ENCODE measurements at regions of chr17 and their contacts with region 1.

Region 1: GRCh38 chr17:7909080-7909479 is 7.0 kb downstream of the RNF227 start:
- DNase-seq: no peak
- ATAC-seq: no peak
- H3K4me3 Mint-ChIP-seq: no peak overlapping the region
- H3K27ac Mint-ChIP-seq: no peak overlapping the region
- H3K4me1 Mint-ChIP-seq: peaks cover 4% of the 10 kb centered on the region
- H3K27me3 Mint-ChIP-seq: no peaks in the 10 kb centered on the region
- CTCF ChIP-seq: no peak

Region 2: GRCh38 chr17:7922845-7923628 is 14.0 kb after region 1 on chr17:
- CTCF ChIA-PET with region 1: no interaction called
- POLR2A ChIA-PET with region 1: no interaction called
- intact Hi-C with region 1: loop called (anchors 1 kb)
- DNase-seq: peak; percentile 71
- ATAC-seq: peak; percentile 98
- H3K4me3 Mint-ChIP-seq: peak overlapping the region; percentile 82
- H3K27ac Mint-ChIP-seq: peak overlapping the region; percentile 80
- H3K4me1 Mint-ChIP-seq: peaks cover 19% of the 10 kb centered on the region
- H3K27me3 Mint-ChIP-seq: no peaks in the 10 kb centered on the region
- CTCF ChIP-seq: no peak

Region 3: GRCh38 chr17:8046306-8046928 is 137.3 kb after region 1 on chr17:
- CTCF ChIA-PET with region 1: interaction called, 16 read pairs
- POLR2A ChIA-PET with region 1: no interaction called
- intact Hi-C with region 1: loop called (anchors 1 kb)
- DNase-seq: no peak
- ATAC-seq: no peak
- H3K4me3 Mint-ChIP-seq: no peak overlapping the region
- H3K27ac Mint-ChIP-seq: no peak overlapping the region
- H3K4me1 Mint-ChIP-seq: no peaks in the 10 kb centered on the region
- H3K27me3 Mint-ChIP-seq: peaks cover 6% of the 10 kb centered on the region
- CTCF ChIP-seq: no peak

Measured in activated B cell treated with CpG ODN at 0.5 μM for 24 hours (primary cell).